ENCODE measurements at regions of chr1 and their contacts with region 1.

Region 1: GRCh38 chr1:150363426-150364230 is at the start of gene RPRD2:
- H3K4me3 Mint-ChIP-seq: peak within 1 kb of the TSS; percentile 80
- H3K27ac Mint-ChIP-seq: peak within 1 kb of the TSS; percentile 97
- H3K4me1 Mint-ChIP-seq: peaks cover 22% of the 10 kb centered on the region
- H3K27me3 Mint-ChIP-seq: no peaks in the 10 kb centered on the region

Region 2: GRCh38 chr1:150293433-150294168 is 70.0 kb before region 1 on chr1 and contains the start of gene MRPS21:
- intact Hi-C with region 1: no loop called
- H3K4me3 Mint-ChIP-seq: peak within 1 kb of the TSS; percentile 87
- H3K27ac Mint-ChIP-seq: peak within 1 kb of the TSS; percentile 95
- H3K4me1 Mint-ChIP-seq: peaks cover 28% of the 10 kb centered on the region
- H3K27me3 Mint-ChIP-seq: peaks cover 4% of the 10 kb centered on the region

Region 3: DNA sequence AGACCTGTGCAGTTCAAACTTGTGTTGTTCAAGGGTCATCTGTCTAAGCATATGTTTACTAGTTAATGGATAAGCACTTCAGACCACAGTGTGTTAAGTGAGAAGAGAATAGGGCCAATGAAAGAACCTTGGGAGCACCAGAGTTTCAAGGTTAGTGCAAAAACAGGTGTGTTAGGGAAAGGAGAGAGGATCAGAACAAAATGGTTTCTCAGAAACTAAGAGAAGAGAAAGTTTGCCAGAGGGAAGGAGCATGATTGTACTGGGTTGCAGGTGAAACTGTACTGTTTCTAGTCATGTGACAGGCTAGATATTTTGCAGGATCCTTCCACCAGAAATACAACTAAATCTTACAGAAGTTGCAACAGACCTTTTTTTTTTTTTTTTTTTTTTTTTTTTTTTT is 23.6 kb after region 1 on chr1:
- intact Hi-C with region 1: no loop called
- H3K4me3 Mint-ChIP-seq: no peak overlapping the region
- H3K27ac Mint-ChIP-seq: no peak overlapping the region
- H3K4me1 Mint-ChIP-seq: peaks cover 36% of the 10 kb centered on the region
- H3K27me3 Mint-ChIP-seq: no peaks in the 10 kb centered on the region

Region 4: DNA sequence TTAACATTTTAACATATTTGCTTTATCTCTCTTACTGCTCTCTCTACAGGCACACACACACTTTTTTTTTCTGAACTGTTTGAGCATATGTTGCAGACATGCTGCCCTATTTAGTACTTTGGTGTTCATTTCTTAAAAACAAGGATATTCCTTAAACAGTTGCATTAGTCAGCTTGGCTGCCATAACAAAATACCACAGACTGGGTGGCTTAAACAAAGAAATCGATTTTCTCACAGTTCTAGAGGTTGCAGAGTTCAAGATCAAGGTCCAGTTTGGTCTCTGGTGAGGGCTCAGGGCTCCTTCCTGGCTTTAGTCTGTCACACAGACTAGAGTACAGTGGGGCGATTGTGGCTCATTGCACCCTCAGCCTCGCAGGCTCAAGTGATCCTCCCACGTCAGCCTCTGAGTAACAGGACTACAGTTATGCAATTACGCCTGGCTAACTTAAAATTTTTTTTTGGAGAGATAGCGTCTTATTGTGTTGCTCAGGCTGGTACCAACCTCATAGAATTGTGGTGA is 47.0 kb after region 1 on chr1:
- intact Hi-C with region 1: loop called (anchors 10 kb)
- H3K4me3 Mint-ChIP-seq: no peak overlapping the region
- H3K27ac Mint-ChIP-seq: no peak overlapping the region
- H3K4me1 Mint-ChIP-seq: peaks cover 40% of the 10 kb centered on the region
- H3K27me3 Mint-ChIP-seq: no peaks in the 10 kb centered on the region

Region 5: GRCh38 chr1:150979092-150980056 is 615.7 kb after region 1 on chr1:
- intact Hi-C with region 1: loop called (anchors 10 kb)
- H3K4me3 Mint-ChIP-seq: peak overlapping the region; percentile 69
- H3K27ac Mint-ChIP-seq: peak overlapping the region; percentile 97
- H3K4me1 Mint-ChIP-seq: peaks cover 49% of the 10 kb centered on the region
- H3K27me3 Mint-ChIP-seq: no peaks in the 10 kb centered on the region